ENCODE measurements at regions of chr13 and their contacts with region 1.

Region 1: DNA sequence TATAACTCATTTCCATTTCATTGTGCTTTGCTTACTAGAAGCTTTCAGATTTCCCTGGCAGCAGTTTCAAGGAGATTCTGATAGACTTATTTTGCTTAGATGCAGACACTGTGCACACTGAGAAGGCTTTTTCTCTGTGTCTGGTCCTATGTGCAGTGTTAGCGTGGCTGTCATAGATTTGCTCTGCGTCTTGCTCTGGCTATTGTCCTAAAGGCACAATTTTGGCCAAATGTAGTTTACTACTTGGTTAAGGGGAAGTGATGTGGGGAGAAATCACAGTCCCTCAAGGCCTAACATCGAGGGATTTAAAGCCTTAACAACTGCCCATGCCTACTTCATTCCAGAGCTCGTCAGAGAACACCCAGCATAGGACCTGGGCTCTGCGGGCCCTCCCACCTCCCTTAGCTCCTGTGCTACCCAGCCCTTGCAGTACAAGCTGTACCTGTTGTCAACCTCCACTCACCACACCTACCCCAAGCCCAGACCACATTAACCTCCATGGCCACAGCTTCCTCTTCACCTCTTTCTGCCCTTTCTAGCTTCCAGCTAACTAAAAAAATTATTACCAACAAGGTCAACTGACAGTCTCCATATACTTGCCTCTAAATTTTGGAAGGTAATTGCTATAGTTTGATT is 38.9 kb upstream of the KATNAL1 start:
- DNase-seq: peak; percentile 30 to 89 (median 56)
- ATAC-seq: peak; percentile 93
- H3K4me3 ChIP-seq: peak overlapping the region; percentile 18
- H3K4me3 Mint-ChIP-seq: peak overlapping the region; percentile 61
- H3K27ac ChIP-seq: no peak overlapping the region
- H3K27ac Mint-ChIP-seq: peak overlapping the region; percentile 62
- H3K4me1 ChIP-seq: peaks cover 38% of the 10 kb centered on the region
- H3K4me1 Mint-ChIP-seq: peaks cover 55% of the 10 kb centered on the region
- H3K27me3 ChIP-seq: no peaks in the 10 kb centered on the region
- H3K27me3 Mint-ChIP-seq: no peaks in the 10 kb centered on the region
- CTCF ChIP-seq: no peak

Region 2: DNA sequence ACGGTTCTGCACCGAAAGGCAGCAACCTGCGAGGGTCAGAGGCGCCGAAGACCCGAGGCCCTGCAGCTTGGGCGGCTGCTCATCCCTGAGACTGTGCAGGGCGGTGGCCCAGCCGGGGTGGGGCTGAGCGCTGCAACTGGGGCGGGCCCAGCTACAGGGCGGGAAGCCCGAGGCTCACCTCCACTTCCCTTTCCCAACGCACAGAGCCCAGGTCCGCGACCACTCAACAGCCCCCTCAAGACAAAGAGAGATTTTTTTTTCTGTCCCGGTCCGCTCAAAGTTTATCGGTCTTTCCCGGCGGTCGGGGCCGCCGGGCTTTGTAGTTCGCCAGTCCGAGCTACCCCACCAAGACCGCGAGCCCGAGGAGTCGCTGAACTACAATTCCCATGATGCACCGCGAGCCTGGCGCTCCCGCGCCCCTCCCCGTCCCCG is 39.5 kb before region 1 on chr13:
- CTCF ChIA-PET with region 1: no interaction called
- POLR2A ChIA-PET with region 1: interaction called, 17 read pairs
- intact Hi-C with region 1: no loop called
- DNase-seq: peak; percentile 81 to 94 (median 88)
- ATAC-seq: peak; percentile 85
- H3K4me3 ChIP-seq: peak overlapping the region; percentile 86
- H3K4me3 Mint-ChIP-seq: peak overlapping the region; percentile 92
- H3K27ac ChIP-seq: peak overlapping the region; percentile 41 to 47
- H3K27ac Mint-ChIP-seq: peak overlapping the region; percentile 68
- H3K4me1 ChIP-seq: peaks cover 12% of the 10 kb centered on the region
- H3K4me1 Mint-ChIP-seq: peaks cover 12% of the 10 kb centered on the region
- H3K27me3 ChIP-seq: no peaks in the 10 kb centered on the region
- H3K27me3 Mint-ChIP-seq: no peaks in the 10 kb centered on the region
- CTCF ChIP-seq: no peak

Region 3: GRCh38 chr13:30529085-30529834 is 183.0 kb after region 1 on chr13:
- CTCF ChIA-PET with region 1: no interaction called
- POLR2A ChIA-PET with region 1: no interaction called
- intact Hi-C with region 1: no loop called
- DNase-seq: no peak
- ATAC-seq: no peak
- H3K4me3 ChIP-seq: no peak overlapping the region
- H3K4me3 Mint-ChIP-seq: no peak overlapping the region
- H3K27ac ChIP-seq: no peak overlapping the region
- H3K27ac Mint-ChIP-seq: no peak overlapping the region
- H3K4me1 ChIP-seq: no peaks in the 10 kb centered on the region
- H3K4me1 Mint-ChIP-seq: peaks cover 12% of the 10 kb centered on the region
- H3K27me3 ChIP-seq: no peaks in the 10 kb centered on the region
- H3K27me3 Mint-ChIP-seq: no peaks in the 10 kb centered on the region
- CTCF ChIP-seq: no peak

Measured in CD4-positive, alpha-beta T cell (primary cell).